Left cardiac atrium (tissue), 4 donors: ENCODE measurements at regions of chr16 and their contacts with region 1.

Region 1: DNA sequence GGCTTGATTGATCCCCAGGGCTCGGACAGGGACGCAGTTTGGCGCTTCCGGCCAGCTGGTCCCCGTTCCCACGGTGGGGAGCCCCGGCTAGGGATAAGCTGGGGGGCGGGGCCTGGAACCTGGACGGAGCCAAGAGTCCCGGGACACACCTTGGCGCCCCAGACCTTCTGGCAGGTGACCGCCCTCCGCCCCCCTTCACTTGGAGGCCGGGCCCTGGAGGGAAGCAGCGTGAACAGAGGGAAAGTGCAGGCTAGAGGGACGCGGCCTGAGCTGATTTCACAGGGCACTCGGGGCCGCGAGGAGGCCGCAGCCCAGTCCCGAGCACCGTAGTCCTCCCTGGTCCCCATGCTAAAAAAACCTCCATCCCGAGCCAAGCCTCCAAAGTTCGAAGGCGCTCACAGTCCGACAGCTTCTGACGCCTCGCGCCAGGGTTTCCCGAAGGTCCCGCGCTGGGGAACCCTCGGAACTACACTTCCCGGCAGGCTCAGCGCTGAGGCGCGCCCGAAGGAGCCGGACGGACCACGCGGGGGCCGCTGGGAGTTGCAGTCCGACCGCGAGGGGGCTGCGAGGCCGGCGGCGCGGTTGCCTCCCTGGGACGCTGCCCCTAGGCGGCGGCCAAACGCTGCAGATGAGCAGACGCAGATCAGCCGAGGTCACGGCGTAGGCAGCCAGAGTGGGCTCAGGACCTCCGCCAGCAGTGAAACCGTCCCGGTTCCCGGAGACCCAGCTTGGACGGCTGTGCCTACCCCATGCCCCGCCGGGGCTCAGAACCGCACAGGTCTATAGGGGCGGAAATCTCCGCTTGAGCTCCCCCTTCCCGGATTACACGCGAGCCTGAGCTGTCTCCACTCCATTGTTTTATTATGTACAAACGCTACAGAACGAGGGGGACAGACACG is at the start of gene TBX6:
- DNase-seq: peak; percentile 96
- ATAC-seq: peak; percentile 92 to 93
- total RNA-seq, gene TBX6: 0.55 to 0.80 TPM

Region 2: GRCh38 chr16:30041846-30042267 is 49.9 kb before region 1 on chr16:
- intact Hi-C with region 1: loop called in 1 of 2 experiments (anchors 10 kb)
- DNase-seq: no peak
- ATAC-seq: no peak

Region 3: GRCh38 chr16:30407102-30407803 is 315.5 kb after region 1 on chr16 and contains the start of gene ZNF771:
- intact Hi-C with region 1: loop called in 1 of 2 experiments (anchors 10 kb)
- DNase-seq: peak; percentile 96
- ATAC-seq: peak; percentile 97
- total RNA-seq, gene ZNF771: 5.9 to 6.2 TPM

Region 4: DNA sequence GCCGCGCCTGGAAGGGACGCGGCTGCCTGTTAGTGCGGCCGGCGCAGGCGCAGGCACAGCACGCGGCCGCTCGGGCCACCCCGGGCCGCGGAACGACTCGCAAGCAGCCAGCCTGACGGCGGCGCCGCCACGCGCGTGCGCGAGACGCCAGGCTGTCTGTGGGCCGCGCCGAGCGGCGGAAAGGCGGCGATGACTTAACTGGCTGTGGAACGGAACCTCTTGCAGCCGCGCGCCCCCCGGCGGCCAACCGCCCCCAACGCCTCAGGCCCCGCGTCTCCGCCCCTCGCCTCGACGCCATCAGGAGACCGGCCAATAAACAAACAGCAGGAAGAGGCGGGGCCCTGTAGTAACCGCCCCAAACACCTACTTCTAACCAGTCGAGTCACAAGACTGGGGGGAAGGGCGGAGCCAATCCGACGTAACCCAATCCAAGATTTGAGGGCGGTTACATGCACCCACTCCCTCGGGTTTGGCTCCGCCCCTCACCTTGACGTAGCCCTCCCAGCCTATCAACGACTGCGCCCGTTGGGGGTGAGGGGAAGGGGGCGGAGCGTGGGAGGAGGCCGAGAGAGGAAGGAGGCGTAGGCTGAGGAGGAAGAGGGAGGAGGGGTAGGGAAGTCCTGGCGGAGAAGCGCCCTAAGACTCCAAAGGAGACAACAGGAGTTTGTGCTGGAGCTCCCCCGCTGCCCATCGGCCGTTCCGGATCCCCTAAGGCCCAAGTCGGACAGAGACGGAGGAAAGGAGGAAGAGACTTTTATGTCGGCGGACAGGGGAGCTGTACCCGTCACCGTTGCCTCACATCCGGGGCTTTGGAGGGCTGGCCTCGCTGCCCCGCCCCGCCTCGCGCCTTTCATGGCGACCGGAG is 566.4 kb after region 1 on chr16 and contains the start of gene FBRS:
- intact Hi-C with region 1: loop called in 1 of 2 experiments (anchors 10 kb)
- DNase-seq: peak; percentile 100
- ATAC-seq: peak; percentile 88 to 90
- total RNA-seq, gene FBRS: 29.5 to 37.2 TPM